ENCODE measurements at regions of chr4 and their contacts with region 1.

Region 1: DNA sequence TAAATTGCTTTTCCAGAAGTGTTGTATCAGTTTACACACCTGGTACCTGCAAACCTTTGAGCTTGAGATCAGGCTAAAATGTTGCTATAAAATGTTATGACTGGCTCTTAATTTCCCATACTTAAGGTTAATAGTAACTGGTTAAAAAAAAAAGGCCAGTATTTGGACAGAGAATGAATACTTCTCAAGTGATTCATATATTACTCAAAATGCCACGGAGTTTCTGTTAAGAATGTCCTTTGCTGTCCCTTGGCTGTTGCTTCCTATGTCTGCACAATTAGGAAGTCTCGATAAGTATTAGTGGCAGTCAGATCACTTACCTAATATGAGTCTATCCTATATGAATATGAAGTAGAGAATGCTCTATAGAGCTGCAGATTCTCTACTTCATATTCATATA is 232.2 kb upstream of the IGFBP7 start:
- DNase-seq: no peak
- H3K4me3 ChIP-seq: no peak overlapping the region
- H3K27ac ChIP-seq: no peak overlapping the region
- H3K4me1 ChIP-seq: no peaks in the 10 kb centered on the region
- H3K27me3 ChIP-seq: no peaks in the 10 kb centered on the region
- CTCF ChIP-seq: no peak

Region 2: DNA sequence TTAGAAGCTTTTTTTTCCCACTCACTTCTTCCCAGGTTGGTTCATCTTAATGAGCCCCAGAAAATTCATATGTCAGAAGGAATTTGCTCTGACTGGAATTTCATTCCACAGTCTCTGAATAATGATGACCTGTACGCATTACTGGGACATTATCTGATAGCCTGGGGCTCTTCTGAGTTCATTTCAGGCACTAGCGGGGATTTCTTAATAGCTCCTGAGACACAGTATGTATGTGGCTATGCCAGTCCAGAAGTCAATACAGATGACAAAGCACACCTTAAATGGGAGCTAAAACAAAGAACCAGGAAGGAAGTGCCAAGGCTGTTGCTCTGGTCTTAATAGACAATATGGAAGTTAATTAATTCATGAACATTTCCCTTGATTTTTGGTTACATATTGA is 63.0 kb after region 1 on chr4:
- CTCF ChIA-PET with region 1: no interaction called
- POLR2A ChIA-PET with region 1: no interaction called
- intact Hi-C with region 1: loop called (anchors 10 kb)
- DNase-seq: no peak
- H3K4me3 ChIP-seq: no peak overlapping the region
- H3K27ac ChIP-seq: no peak overlapping the region
- H3K4me1 ChIP-seq: no peaks in the 10 kb centered on the region
- H3K27me3 ChIP-seq: no peaks in the 10 kb centered on the region
- CTCF ChIP-seq: no peak

Measured in A673 (cell line).